ENCODE measurements at regions of chr14 and their contacts with region 1.

Region 1: GRCh38 chr14:67704484-67705089 is 2.9 kb downstream of the RDH12 start:
- DNase-seq: peak in 5 of 9 experiments; percentile 8 to 78 (median 22)
- ATAC-seq: peak; percentile 81
- H3K4me3 ChIP-seq: no peak overlapping the region
- H3K4me3 Mint-ChIP-seq: no peak overlapping the region
- H3K27ac ChIP-seq: no peak overlapping the region
- H3K27ac Mint-ChIP-seq: no peak overlapping the region
- H3K4me1 ChIP-seq: no peaks in the 10 kb centered on the region
- H3K4me1 Mint-ChIP-seq: no peaks in the 10 kb centered on the region
- H3K27me3 ChIP-seq: no peaks in the 10 kb centered on the region
- H3K27me3 Mint-ChIP-seq: peaks cover 6% of the 10 kb centered on the region
- CTCF ChIP-seq: peak; percentile 58

Region 2: GRCh38 chr14:66359500-66359899 is 1345.1 kb before region 1 on chr14:
- CTCF ChIA-PET with region 1: interaction called, 5 read pairs
- POLR2A ChIA-PET with region 1: no interaction called
- intact Hi-C with region 1: loop called in 1 of 2 experiments (anchors 5 kb)
- DNase-seq: peak in 4 of 9 experiments; percentile 2 to 78 (median 50)
- ATAC-seq: peak; percentile 51
- H3K4me3 ChIP-seq: no peak overlapping the region
- H3K4me3 Mint-ChIP-seq: no peak overlapping the region
- H3K27ac ChIP-seq: no peak overlapping the region
- H3K27ac Mint-ChIP-seq: no peak overlapping the region
- H3K4me1 ChIP-seq: no peaks in the 10 kb centered on the region
- H3K4me1 Mint-ChIP-seq: no peaks in the 10 kb centered on the region
- H3K27me3 ChIP-seq: no peaks in the 10 kb centered on the region
- H3K27me3 Mint-ChIP-seq: no peaks in the 10 kb centered on the region
- CTCF ChIP-seq: peak; percentile 75

Region 3: GRCh38 chr14:67571272-67571850 is 133.2 kb before region 1 on chr14:
- CTCF ChIA-PET with region 1: interaction called, 20 read pairs
- POLR2A ChIA-PET with region 1: no interaction called
- intact Hi-C with region 1: no loop called
- DNase-seq: peak; percentile 38 to 81 (median 70)
- ATAC-seq: peak; percentile 91
- H3K4me3 ChIP-seq: no peak overlapping the region
- H3K4me3 Mint-ChIP-seq: no peak overlapping the region
- H3K27ac ChIP-seq: no peak overlapping the region
- H3K27ac Mint-ChIP-seq: no peak overlapping the region
- H3K4me1 ChIP-seq: no peaks in the 10 kb centered on the region
- H3K4me1 Mint-ChIP-seq: no peaks in the 10 kb centered on the region
- H3K27me3 ChIP-seq: no peaks in the 10 kb centered on the region
- H3K27me3 Mint-ChIP-seq: peaks cover 6% of the 10 kb centered on the region
- CTCF ChIP-seq: peak; percentile 74

Region 4: DNA sequence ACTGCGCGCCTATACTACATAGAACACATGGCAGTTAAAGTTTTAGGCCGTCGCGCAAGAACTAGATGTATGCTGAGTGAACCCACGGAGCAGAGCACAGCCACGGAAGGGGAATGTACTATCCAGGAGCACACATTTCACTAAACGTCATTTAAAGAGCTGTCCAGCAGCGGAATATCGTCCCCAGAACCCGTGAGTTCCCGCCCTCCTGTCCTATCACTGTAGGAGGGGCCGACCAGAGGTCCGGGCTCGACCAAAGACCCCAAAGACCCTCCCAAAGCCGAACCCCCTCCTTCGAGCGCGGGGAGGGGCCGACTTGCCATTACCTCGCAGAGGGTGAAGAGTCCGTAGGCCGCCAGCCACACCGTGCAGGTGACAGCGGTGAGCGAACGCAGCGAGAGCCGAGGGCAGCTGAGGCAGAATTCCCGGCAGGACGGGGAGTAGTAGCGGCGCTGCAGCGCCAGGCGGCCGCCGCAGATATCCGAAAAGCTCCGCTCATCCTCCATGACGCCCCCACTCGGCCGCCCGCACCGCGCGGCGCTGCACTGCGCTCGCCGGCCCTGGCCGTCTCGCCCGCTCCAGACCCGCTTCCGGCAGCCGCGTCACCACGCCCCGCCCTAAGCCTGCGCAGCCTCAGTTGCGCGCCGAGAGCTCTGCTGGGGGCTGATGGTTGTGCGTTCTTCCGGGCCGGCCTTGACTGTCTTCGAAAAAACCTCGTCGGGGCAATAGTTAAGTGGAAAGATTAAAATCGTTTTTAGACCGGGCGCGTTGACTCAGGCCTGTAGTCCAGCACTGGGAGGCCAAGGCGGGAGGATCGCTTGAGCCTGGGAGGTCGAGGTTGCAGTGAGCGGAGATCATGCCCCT is 104.7 kb before region 1 on chr14 and contains the start of gene PIGH:
- CTCF ChIA-PET with region 1: interaction called, 10 read pairs
- POLR2A ChIA-PET with region 1: interaction called, 4 read pairs
- intact Hi-C with region 1: no loop called
- DNase-seq: peak; percentile 90 to 97 (median 94)
- ATAC-seq: peak; percentile 97
- H3K4me3 ChIP-seq: peak within 1 kb of the TSS; percentile 92 to 99
- H3K4me3 Mint-ChIP-seq: peak within 1 kb of the TSS; percentile 98
- H3K27ac ChIP-seq: peak within 1 kb of the TSS; percentile 74 to 87
- H3K27ac Mint-ChIP-seq: peak within 1 kb of the TSS; percentile 98
- H3K4me1 ChIP-seq: peaks cover 19% of the 10 kb centered on the region
- H3K4me1 Mint-ChIP-seq: peaks cover 49% of the 10 kb centered on the region
- H3K27me3 ChIP-seq: no peaks in the 10 kb centered on the region
- H3K27me3 Mint-ChIP-seq: no peaks in the 10 kb centered on the region
- CTCF ChIP-seq: peak; percentile 52
- total RNA-seq, gene PIGH: 66.0 to 67.8 TPM

Region 5: GRCh38 chr14:67666750-67667449 is 37.7 kb before region 1 on chr14:
- CTCF ChIA-PET with region 1: interaction called, 10 read pairs
- POLR2A ChIA-PET with region 1: no interaction called
- intact Hi-C with region 1: loop called (anchors 2 to 5 kb)
- DNase-seq: peak in 4 of 9 experiments; percentile 26 to 76 (median 46)
- ATAC-seq: peak; percentile 91
- H3K4me3 ChIP-seq: no peak overlapping the region
- H3K4me3 Mint-ChIP-seq: no peak overlapping the region
- H3K27ac ChIP-seq: peak overlapping the region in 1 of 2 experiments; percentile 21
- H3K27ac Mint-ChIP-seq: no peak overlapping the region
- H3K4me1 ChIP-seq: peaks cover 25% of the 10 kb centered on the region
- H3K4me1 Mint-ChIP-seq: peaks cover 60% of the 10 kb centered on the region
- H3K27me3 ChIP-seq: no peaks in the 10 kb centered on the region
- H3K27me3 Mint-ChIP-seq: no peaks in the 10 kb centered on the region
- CTCF ChIP-seq: peak; percentile 61

Region 6: GRCh38 chr14:67784244-67784823 is 79.7 kb after region 1 on chr14:
- CTCF ChIA-PET with region 1: no interaction called
- POLR2A ChIA-PET with region 1: no interaction called
- intact Hi-C with region 1: no loop called
- DNase-seq: no peak
- ATAC-seq: no peak
- H3K4me3 ChIP-seq: no peak overlapping the region
- H3K4me3 Mint-ChIP-seq: no peak overlapping the region
- H3K27ac ChIP-seq: no peak overlapping the region
- H3K27ac Mint-ChIP-seq: no peak overlapping the region
- H3K4me1 ChIP-seq: no peaks in the 10 kb centered on the region
- H3K4me1 Mint-ChIP-seq: no peaks in the 10 kb centered on the region
- H3K27me3 ChIP-seq: no peaks in the 10 kb centered on the region
- H3K27me3 Mint-ChIP-seq: no peaks in the 10 kb centered on the region
- CTCF ChIP-seq: no peak